ENCODE measurements at regions of chr4 and their contacts with region 1.

Region 1: DNA sequence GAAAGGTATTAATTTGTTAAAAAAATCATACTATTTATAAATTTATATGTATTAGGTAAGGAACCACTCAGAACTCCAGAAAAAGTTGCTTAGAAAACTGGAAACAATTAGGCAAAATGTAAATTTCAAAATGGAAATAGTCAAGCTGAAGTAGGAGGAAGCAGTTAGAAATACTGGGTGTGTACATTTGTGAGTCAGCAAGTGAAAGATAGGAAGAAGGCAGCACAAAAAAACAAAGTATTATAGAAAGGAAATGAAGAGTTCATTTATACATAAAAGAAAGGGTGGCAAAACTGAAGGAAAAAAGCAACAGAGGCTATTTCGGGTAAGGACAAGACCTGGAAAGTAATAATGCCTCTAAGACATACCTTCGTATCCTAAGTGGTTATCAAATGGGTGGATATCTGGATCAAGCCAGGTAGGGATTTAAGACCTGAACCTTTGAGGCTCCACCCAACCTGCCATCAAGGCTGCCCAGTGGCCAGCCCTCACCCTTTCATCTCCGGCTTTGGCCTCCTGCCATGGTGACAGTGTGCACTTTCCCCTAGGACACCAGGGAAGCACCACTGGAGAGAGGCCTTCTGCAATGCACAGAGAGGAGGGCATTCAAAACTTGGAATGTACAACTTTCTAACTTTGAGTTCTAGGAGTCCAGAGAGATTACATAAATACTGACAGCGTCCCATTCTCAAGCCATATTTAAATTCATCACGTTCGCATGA is at the start of gene LRRC66:
- DNase-seq: no peak
- H3K4me3 ChIP-seq: no peak within 1 kb of the TSS
- H3K27ac ChIP-seq: no peak within 1 kb of the TSS
- H3K4me1 ChIP-seq: no peaks in the 10 kb centered on the region
- H3K27me3 ChIP-seq: no peaks in the 10 kb centered on the region
- CTCF ChIP-seq: no peak
- POLR2A ChIP-seq: no peak
- total RNA-seq, gene LRRC66: 0.23 TPM in 1 of 2 donors, not detected in the other

Region 2: DNA sequence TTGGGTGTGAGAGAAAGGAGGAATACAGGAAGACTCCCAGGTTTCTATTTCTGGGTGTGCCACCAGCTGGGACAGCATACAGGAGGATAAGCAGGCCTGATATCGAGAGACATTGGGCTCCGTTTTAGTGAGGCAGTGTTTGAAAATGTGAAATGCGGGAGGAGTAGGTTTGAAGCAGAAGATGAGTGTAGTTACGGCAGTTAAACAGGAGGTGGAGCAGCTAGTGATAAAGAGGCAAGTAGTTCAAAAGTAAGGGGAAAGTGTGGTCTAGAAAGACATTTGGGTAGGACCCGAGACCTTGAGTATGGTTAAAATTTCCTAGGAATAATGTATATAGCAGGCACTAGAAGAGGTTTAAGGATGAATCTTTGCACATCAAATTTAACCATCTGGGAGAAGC is 134.7 kb before region 1 on chr4:
- intact Hi-C with region 1: loop called (anchors 5 kb)
- DNase-seq: no peak
- H3K4me3 ChIP-seq: no peak overlapping the region
- H3K27ac ChIP-seq: no peak overlapping the region
- H3K4me1 ChIP-seq: no peaks in the 10 kb centered on the region
- H3K27me3 ChIP-seq: no peaks in the 10 kb centered on the region
- CTCF ChIP-seq: no peak
- POLR2A ChIP-seq: no peak

Region 3: GRCh38 chr4:52317981-52318380 is 297.9 kb after region 1 on chr4:
- intact Hi-C with region 1: no loop called
- DNase-seq: no peak
- H3K4me3 ChIP-seq: no peak overlapping the region
- H3K27ac ChIP-seq: no peak overlapping the region
- H3K4me1 ChIP-seq: no peaks in the 10 kb centered on the region
- H3K27me3 ChIP-seq: no peaks in the 10 kb centered on the region
- CTCF ChIP-seq: no peak
- POLR2A ChIP-seq: no peak